ENCODE measurements at regions of chr12 and their contacts with region 1.

Region 1: DNA sequence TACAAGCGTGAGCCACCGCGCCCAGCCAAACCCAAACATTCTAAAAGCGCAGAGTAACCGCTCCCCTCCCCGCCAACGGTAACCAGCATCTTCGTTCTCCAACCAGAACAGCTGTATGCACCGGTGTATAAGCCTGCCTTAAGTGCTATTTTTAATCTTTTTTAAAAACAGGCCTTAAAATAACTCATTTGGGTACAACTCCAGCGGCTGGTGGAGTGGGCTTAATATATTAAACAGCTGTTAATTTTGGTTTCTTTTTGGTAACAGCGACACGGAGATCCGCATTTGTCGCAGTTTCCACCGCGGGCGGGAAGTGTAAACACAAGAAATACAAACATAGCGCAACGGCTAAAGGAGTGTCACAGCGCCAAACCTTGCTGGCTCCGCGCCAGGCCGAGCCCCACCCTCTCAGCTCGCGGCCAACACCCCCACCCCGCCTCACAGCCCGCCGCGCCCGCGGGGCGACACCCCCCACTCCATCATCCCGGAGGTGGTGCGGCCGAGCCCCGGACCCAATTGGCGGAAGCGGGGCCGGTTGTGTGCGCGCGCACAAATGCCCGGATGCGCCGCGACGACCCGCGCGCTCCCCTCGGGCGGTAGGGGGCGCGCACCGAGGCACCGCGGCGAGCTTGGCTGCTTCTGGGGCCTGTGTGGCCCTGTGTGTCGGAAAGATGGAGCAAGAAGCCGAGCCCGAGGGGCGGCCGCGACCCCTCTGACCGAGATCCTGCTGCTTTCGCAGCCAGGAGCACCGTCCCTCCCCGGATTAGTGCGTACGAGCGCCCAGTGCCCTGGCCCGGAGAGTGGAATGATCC is at the start of gene MDM2:
- DNase-seq: peak; percentile 97
- H3K4me3 ChIP-seq: peak within 1 kb of the TSS; percentile 100
- H3K4me3 Mint-ChIP-seq: peak within 1 kb of the TSS; percentile 92
- H3K27ac Mint-ChIP-seq: peak within 1 kb of the TSS; percentile 98
- H3K4me1 ChIP-seq: peaks cover 16% of the 10 kb centered on the region
- H3K4me1 Mint-ChIP-seq: peaks cover 22% of the 10 kb centered on the region
- H3K27me3 ChIP-seq: no peaks in the 10 kb centered on the region
- H3K27me3 Mint-ChIP-seq: no peaks in the 10 kb centered on the region
- CTCF ChIP-seq: peak; percentile 60 to 66
- total RNA-seq, gene MDM2: 113 and 118 TPM in 2 replicates

Region 2: DNA sequence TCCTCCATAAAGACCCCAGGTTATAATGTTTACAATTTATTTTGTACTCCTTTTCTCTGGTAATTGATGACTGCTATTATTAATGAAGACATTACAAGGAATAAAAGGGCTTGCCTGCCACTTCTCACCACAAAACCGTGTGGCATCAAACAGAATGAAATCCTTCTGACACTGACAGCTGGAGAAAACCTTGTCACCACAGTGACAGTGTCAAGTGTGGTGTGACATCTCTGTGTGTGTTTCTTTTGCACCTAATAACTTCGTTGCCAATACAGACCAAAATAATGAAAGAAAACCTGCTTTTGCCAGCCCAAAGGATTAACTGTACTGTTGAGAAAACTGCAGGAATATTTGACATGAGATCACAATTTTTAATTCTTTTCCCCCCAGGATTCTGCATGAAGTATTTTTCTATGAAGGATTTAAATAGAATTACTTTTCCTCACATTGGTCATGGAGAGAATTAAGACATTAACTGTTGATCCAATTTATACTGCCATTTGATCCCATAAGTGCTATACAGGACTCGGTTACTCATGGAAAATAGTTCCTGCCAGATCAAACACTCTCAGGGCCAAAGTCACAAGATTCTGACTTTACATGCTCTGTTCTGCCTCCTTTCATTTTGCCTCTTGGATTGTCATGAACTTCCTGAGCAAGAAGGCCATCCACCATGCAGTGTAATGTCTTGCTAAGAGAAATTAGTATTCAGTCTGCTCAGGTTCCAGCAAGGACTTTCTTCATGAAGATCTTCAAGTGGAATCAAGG is 879.0 kb before region 1 on chr12:
- CTCF ChIA-PET with region 1: no interaction called
- POLR2A ChIA-PET with region 1: no interaction called
- intact Hi-C with region 1: no loop called
- DNase-seq: no peak
- H3K4me3 ChIP-seq: no peak overlapping the region
- H3K4me3 Mint-ChIP-seq: no peak overlapping the region
- H3K27ac Mint-ChIP-seq: no peak overlapping the region
- H3K4me1 ChIP-seq: peaks cover 25% of the 10 kb centered on the region
- H3K4me1 Mint-ChIP-seq: peaks cover 17% of the 10 kb centered on the region
- H3K27me3 ChIP-seq: no peaks in the 10 kb centered on the region
- H3K27me3 Mint-ChIP-seq: no peaks in the 10 kb centered on the region
- CTCF ChIP-seq: no peak

Region 3: DNA sequence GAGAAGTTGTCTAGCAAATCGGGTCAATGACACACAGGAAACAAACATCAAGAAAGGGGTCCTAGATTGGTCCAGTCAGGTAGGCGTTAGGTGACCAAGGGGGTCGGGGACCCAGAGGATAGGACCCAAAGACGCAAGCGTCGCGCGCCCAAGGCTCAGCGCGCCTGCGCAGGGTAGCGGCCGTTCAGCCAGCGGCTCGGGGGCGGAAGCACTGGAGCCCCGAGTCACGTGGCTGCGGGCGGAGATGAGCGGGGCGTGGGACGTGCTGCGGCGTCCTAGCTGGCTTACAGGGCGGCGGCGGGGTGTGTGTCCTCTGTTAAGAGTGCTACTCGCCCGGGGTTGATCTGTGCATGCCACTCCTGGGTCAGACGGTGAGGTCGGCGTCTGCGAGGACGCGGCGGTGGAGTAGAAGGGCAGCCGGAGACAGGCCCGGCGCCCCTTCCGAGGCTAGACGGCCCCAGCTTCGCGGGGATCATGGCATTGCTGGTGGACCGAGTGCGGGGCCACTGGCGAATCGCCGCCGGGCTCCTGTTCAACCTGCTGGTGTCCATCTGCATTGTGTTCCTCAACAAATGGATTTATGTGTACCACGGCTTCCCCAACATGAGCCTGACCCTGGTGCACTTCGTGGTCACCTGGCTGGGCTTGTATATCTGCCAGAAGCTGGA is 61.7 kb before region 1 on chr12 and contains the start of gene SLC35E3:
- CTCF ChIA-PET with region 1: interaction called, 7 read pairs
- POLR2A ChIA-PET with region 1: interaction called, 8 read pairs
- intact Hi-C with region 1: loop called (anchors 1 kb)
- DNase-seq: peak; percentile 94
- H3K4me3 ChIP-seq: peak within 1 kb of the TSS; percentile 65
- H3K4me3 Mint-ChIP-seq: peak within 1 kb of the TSS; percentile 92
- H3K27ac Mint-ChIP-seq: peak within 1 kb of the TSS; percentile 88
- H3K4me1 ChIP-seq: no peaks in the 10 kb centered on the region; the same call in 1 of the 2 replicates
- H3K4me1 Mint-ChIP-seq: peaks cover 6% of the 10 kb centered on the region
- H3K27me3 ChIP-seq: no peaks in the 10 kb centered on the region
- H3K27me3 Mint-ChIP-seq: no peaks in the 10 kb centered on the region
- CTCF ChIP-seq: no peak
- total RNA-seq, gene SLC35E3: 25.0 TPM in 2 replicates

Region 4: DNA sequence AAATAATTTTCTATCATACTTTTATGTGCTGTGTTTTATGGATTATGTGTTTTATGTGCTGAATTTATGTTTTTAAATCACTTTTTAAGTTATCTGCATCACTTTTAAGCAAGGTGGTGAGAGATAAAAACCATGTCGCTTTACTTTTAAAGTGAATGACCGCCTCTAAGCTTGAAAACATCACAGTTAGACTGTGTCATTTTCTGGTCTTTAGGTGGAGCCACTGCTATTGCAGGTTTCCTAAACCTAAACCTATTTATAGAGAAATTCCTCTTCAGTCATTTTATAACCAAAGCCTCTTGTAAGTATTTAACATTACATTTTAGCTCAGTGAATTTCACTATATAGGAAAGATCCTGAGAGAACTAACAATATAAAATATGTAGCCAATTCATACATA is 20.9 kb before region 1 on chr12:
- CTCF ChIA-PET with region 1: interaction called, 7 read pairs
- POLR2A ChIA-PET with region 1: interaction called, 9 read pairs
- intact Hi-C with region 1: loop called (anchors 1 kb)
- DNase-seq: no peak
- H3K4me3 ChIP-seq: no peak overlapping the region
- H3K4me3 Mint-ChIP-seq: peak overlapping the region; percentile 61
- H3K27ac Mint-ChIP-seq: no peak overlapping the region
- H3K4me1 ChIP-seq: peaks cover 23% of the 10 kb centered on the region
- H3K4me1 Mint-ChIP-seq: peaks cover 27% of the 10 kb centered on the region
- H3K27me3 ChIP-seq: no peaks in the 10 kb centered on the region
- H3K27me3 Mint-ChIP-seq: no peaks in the 10 kb centered on the region
- CTCF ChIP-seq: peak in 1 of 2 experiments; percentile 13

Region 5: GRCh38 chr12:68831272-68831671 is 23.5 kb after region 1 on chr12:
- CTCF ChIA-PET with region 1: interaction called, 23 read pairs
- POLR2A ChIA-PET with region 1: interaction called, 8 read pairs
- intact Hi-C with region 1: no loop called
- DNase-seq: no peak
- H3K4me3 ChIP-seq: no peak overlapping the region
- H3K4me3 Mint-ChIP-seq: no peak overlapping the region
- H3K27ac Mint-ChIP-seq: peak overlapping the region; percentile 10
- H3K4me1 ChIP-seq: peaks cover 14% of the 10 kb centered on the region
- H3K4me1 Mint-ChIP-seq: peaks cover 12% of the 10 kb centered on the region
- H3K27me3 ChIP-seq: no peaks in the 10 kb centered on the region
- H3K27me3 Mint-ChIP-seq: no peaks in the 10 kb centered on the region
- CTCF ChIP-seq: no peak

Measured in Caco-2 (cell line).